ENCODE measurements at regions of chr14 and their contacts with region 1.

Region 1: DNA sequence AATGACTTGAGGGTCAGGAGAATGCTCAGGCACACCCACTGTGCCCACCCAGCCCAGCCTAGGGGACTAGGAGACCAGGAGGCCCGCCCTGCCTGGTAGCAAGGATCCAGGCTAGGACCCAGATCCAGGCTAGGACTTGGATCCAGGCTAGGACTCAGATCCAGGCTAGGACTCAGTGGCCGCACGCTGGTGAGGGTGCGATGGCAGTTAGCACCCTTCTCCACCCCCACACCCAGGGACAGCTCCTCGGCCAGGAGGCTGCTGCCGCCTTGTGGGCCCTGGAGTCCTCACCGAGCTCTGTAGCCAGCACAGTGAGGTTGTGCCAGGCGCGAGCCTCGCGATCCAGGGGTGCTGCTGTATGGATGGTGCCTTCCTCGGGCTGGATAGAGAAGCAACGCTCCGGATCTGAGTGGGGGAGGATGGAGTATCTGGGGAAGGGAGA is 5.1 kb downstream of the CDH24 start:
- DNase-seq: peak; percentile 38 to 60 (median 53)
- ATAC-seq: peak; percentile 60
- H3K4me3 ChIP-seq: no peak overlapping the region
- H3K27ac ChIP-seq: no peak overlapping the region
- H3K4me1 ChIP-seq: peaks cover 11 to 39% of the 10 kb centered on the region in 2 experiments
- H3K27me3 ChIP-seq: no peaks in the 10 kb centered on the region
- CTCF ChIP-seq: peak; percentile 73 to 82 (median 77)
- EP300 ChIP-seq: no peak
- POLR2A ChIP-seq: no peak
- RAD21 ChIP-seq: peak; percentile 66 to 89

Region 2: DNA sequence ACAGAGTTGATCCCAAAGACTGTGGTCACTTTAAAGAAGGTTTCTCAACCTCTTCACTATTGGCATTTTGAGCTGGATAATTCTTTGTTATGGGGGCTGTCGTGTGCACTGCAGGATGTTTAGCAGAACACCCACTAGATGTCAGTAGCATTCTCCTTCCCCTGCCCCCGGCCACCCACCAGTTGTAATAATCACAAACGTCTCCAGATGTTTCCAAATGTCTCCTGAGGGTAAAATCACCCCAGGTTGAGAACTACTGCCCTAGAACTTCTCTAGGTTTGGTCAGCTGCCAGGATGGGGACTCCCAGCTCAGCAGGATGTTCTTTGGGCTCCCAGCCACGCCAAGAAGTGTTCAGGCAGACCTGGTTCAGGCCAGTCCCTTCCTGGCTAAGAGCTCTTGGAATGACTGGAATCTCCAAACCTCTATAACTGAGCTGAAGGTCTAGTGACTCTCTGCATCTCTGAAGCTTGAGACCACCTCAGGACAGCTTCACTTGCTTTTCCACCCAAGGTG is 57.4 kb before region 1 on chr14:
- CTCF ChIA-PET with region 1: interaction called, 141 read pairs
- POLR2A ChIA-PET with region 1: interaction called, 4 read pairs
- in situ Hi-C with region 1: no loop called
- intact Hi-C with region 1: loop called (anchors 1 kb)
- DNase-seq: peak; percentile 32 to 74 (median 54)
- ATAC-seq: peak; percentile 94
- H3K4me3 ChIP-seq: no peak overlapping the region
- H3K27ac ChIP-seq: no peak overlapping the region
- H3K4me1 ChIP-seq: peaks cover 7 to 15% of the 10 kb centered on the region in 2 experiments; a peak in 4 of 5 replicates
- H3K27me3 ChIP-seq: no peaks in the 10 kb centered on the region
- CTCF ChIP-seq: peak; percentile 72 to 87 (median 84)
- EP300 ChIP-seq: no peak
- POLR2A ChIP-seq: no peak
- RAD21 ChIP-seq: peak; percentile 73 to 89

Region 3: DNA sequence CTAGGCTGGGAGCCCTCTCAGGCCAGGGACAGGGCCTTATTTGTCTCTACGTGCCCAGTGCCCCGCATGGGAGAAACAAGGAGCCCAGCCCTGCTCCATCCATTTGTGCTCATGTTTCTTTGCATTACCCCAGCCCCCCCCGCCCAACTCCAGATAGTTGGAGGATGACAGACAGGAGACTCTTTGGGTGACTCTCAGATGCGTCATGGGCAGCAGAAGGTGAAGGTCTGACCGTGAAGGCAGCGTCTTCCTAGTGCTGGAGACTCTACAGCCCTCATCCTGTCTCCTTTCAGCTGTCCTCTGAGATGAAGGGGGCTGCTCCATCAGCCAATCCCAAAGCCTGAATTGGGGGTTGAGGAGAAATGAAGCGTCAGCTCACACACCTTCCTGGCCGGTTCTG is 10.5 kb before region 1 on chr14:
- CTCF ChIA-PET with region 1: no interaction called
- POLR2A ChIA-PET with region 1: no interaction called
- in situ Hi-C with region 1: no loop called
- intact Hi-C with region 1: no loop called
- DNase-seq: no peak
- ATAC-seq: no peak
- H3K4me3 ChIP-seq: no peak overlapping the region
- H3K27ac ChIP-seq: no peak overlapping the region
- H3K4me1 ChIP-seq: peaks cover 15 to 31% of the 10 kb centered on the region in 2 experiments
- H3K27me3 ChIP-seq: no peaks in the 10 kb centered on the region
- CTCF ChIP-seq: no peak
- EP300 ChIP-seq: no peak
- POLR2A ChIP-seq: no peak
- RAD21 ChIP-seq: no peak

Measured in K562 (cell line).